ENCODE measurements at regions of chr20 and their contacts with region 1.

Region 1: DNA sequence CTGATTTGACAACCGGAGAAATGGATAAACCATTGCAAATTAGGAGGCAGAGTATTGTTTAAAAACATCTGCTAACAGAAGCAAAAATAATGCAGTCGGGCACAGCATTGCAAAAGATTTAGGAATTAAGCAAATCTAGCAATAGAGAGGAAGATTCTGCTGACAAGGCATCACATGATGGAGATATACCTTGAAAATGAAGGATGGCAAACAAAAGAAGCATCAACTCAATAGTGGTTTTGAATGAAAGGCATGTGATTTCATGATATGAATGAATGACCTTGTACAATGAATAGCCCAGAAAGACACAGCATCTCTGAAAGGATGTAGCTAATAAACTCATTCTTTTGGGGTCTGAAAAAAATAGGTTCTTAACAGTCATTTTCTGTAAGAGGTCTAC is 8.6 kb upstream of the RBM39 start:
- DNase-seq: no peak
- ATAC-seq: no peak
- H3K4me3 Mint-ChIP-seq: no peak overlapping the region
- H3K27ac Mint-ChIP-seq: no peak overlapping the region
- H3K4me1 Mint-ChIP-seq: no peaks in the 10 kb centered on the region
- H3K27me3 Mint-ChIP-seq: no peaks in the 10 kb centered on the region
- CTCF ChIP-seq: no peak

Region 2: DNA sequence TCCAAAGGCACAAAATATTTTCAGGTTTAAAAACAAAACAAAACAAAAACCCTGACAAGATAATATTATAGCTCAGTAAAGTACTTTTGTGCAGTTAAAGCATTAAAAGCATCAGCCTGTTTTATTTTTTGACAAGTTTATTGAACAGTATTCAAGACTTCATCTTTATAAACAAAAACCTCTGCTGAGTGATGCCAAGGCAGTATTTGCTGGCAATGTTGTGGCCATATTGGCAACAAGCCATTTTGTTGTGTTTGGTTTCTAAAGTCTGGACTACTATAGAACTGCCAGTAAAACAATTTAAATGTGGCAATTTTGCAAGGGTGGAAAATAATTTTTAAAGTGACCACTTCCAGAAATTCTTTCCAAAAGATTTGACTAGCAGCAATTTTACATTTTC is 101.8 kb before region 1 on chr20:
- CTCF ChIA-PET with region 1: no interaction called
- POLR2A ChIA-PET with region 1: interaction called, 17 read pairs
- intact Hi-C with region 1: no loop called
- DNase-seq: no peak
- ATAC-seq: no peak
- H3K4me3 Mint-ChIP-seq: no peak overlapping the region
- H3K27ac Mint-ChIP-seq: no peak overlapping the region
- H3K4me1 Mint-ChIP-seq: peaks cover 45% of the 10 kb centered on the region
- H3K27me3 Mint-ChIP-seq: no peaks in the 10 kb centered on the region
- CTCF ChIP-seq: no peak

Region 3: GRCh38 chr20:36411861-36412454 is 661.3 kb after region 1 on chr20:
- CTCF ChIA-PET with region 1: no interaction called
- POLR2A ChIA-PET with region 1: no interaction called
- intact Hi-C with region 1: no loop called
- DNase-seq: no peak
- ATAC-seq: no peak
- H3K4me3 Mint-ChIP-seq: no peak overlapping the region
- H3K27ac Mint-ChIP-seq: no peak overlapping the region
- H3K4me1 Mint-ChIP-seq: no peaks in the 10 kb centered on the region
- H3K27me3 Mint-ChIP-seq: peaks cover 7% of the 10 kb centered on the region
- CTCF ChIP-seq: no peak

Measured in activated B cell treated with CpG ODN at 0.5 μM for 24 hours (primary cell).